Pancreas (tissue), 10 donors: ENCODE measurements at regions of chr6 and their contacts with region 1.

Region 1: GRCh38 chr6:41936073-41936837 is 5.4 kb downstream of the CCND3 start:
- DNase-seq: peak; percentile 58 to 78 (median 62)
- ATAC-seq: peak; percentile 77 to 89 (median 85)
- H3K4me3 ChIP-seq: no peak overlapping the region
- H3K27ac ChIP-seq: no peak overlapping the region
- H3K4me1 ChIP-seq: peaks cover 0 to 7% (median 0%) of the 10 kb centered on the region in 3 donors
- H3K27me3 ChIP-seq: no peaks in the 10 kb centered on the region
- CTCF ChIP-seq: peak; percentile 63 to 80 (median 73)

Region 2: GRCh38 chr6:41787219-41787917 is 148.9 kb before region 1 on chr6 and contains the start of gene TOMM6:
- intact Hi-C with region 1: loop called in 1 of 3 experiments (anchors 10 kb)
- DNase-seq: peak; percentile 92 to 99 (median 96)
- ATAC-seq: peak; percentile 88 to 94 (median 90)
- H3K4me3 ChIP-seq: peak within 1 kb of the TSS; percentile 61 to 93 (median 82)
- H3K27ac ChIP-seq: peak within 1 kb of the TSS; percentile 86 to 93 (median 92)
- H3K4me1 ChIP-seq: peaks cover 9 to 14% (median 11%) of the 10 kb centered on the region in 3 donors
- H3K27me3 ChIP-seq: no peaks in the 10 kb centered on the region
- CTCF ChIP-seq: peak; percentile 91 to 97 (median 95)
- total RNA-seq, gene TOMM6: 48.6 to 86.2 (median 66.8) TPM

Region 3: DNA sequence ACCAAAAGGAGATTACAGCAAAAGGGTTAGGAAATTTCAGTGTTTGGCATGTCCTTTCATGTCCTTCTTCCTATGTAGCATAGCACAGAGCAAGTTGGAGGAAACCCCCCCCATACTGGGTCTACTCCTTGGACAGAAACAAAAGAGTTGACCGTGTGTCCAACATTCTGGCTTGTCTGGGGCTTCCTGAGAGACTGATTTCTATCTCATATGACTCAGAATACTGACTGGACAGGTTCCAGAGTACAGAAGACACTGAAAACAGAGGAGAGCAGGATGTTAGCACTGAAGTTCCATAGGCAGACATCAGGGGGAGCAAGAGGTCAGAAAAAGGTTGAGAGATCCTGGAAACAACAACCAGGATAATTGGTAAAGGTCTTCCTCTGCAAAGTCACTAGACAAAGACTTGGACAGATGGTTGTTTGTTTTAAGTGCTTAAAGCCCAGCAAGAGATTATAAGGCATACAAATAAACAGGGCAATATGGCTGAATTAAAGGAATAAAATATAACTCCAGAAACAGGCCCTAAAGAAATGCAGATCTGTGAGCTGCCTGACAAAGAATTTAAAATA is 89.5 kb before region 1 on chr6:
- intact Hi-C with region 1: loop called in 1 of 3 experiments (anchors 10 kb)
- DNase-seq: peak in 4 of 6 donors; percentile 27 to 76 (median 49)
- ATAC-seq: peak; percentile 88 to 99 (median 98)
- H3K4me3 ChIP-seq: no peak overlapping the region
- H3K27ac ChIP-seq: peak overlapping the region in 1 of 4 donors; percentile 20
- H3K4me1 ChIP-seq: no peaks in the 10 kb centered on the region
- H3K27me3 ChIP-seq: no peaks in the 10 kb centered on the region
- CTCF ChIP-seq: peak; percentile 36 to 71 (median 64)

Region 4: DNA sequence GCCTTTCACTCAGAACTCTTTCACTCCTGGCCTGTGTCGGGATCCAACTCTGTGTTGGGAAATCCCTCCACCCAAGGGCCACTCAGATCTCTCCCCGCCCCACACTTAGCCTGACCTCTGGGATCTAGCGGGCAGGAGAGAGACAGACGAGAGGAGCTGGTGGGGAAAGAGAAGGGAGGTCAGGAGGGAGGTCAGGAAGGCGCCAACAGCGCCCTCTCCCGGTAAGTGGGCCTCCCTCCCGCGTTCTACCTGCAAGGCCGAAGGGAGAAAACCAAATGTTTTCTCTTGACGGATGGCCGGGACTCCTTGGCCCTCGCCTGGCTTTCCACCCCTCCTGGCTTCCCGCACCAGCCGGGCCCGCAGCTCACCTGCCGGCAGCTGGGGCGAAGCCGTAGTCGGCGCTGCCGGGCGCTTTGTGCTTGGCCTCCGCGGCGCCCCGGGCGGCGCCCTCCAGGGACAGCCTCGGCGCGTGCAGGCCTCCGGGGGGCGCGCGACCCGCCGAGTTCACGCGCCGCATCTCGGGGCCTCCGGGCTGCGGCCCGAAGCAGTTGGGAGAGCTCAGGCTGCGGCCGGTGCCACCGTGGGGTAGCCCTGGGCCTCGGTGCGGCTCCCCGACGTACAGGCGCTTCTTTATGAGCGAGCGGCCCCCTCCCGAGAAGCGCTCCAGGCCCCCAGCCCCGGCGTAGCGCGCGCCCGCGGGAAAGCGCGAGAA is 168.0 kb after region 1 on chr6:
- intact Hi-C with region 1: no loop called
- DNase-seq: peak in 2 of 6 donors; percentile 27 to 65
- ATAC-seq: peak in 2 of 4 donors; percentile 14 to 21
- H3K4me3 ChIP-seq: peak overlapping the region in 2 of 4 donors; percentile 16 to 34
- H3K27ac ChIP-seq: no peak overlapping the region
- H3K4me1 ChIP-seq: peaks cover 0 to 8% (median 4%) of the 10 kb centered on the region in 3 donors
- H3K27me3 ChIP-seq: no peaks in the 10 kb centered on the region
- CTCF ChIP-seq: peak in 3 of 4 donors; percentile 16 to 33 (median 31)